T-cell (primary cell): ENCODE measurements at regions of chr6 and their contacts with region 1.

Region 1: DNA sequence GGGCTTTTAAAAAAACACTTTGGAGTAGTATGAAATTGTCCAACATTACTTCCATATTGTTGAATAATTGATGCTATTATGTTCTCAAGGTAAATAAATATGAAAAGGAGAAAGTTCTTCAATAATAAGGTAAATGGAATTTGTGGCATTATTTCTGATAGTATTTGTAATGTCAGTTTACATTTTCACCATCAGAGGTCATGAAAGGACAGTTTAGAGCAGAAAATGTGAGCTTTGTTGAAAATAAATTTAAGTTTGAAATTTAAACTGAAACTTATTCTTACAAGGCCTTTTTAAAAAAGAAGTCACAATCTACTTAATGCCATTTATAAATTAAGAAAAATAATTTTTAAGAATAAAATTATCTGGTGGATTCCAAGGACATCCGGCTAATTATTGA is 15.8 kb upstream of the CEP162 start:
- DNase-seq: no peak
- ATAC-seq: no peak
- H3K4me3 ChIP-seq: no peak overlapping the region
- H3K4me3 Mint-ChIP-seq: no peak overlapping the region
- H3K27ac ChIP-seq: no peak overlapping the region
- H3K27ac Mint-ChIP-seq: no peak overlapping the region
- H3K4me1 ChIP-seq: no peaks in the 10 kb centered on the region
- H3K4me1 Mint-ChIP-seq: no peaks in the 10 kb centered on the region
- H3K27me3 ChIP-seq: no peaks in the 10 kb centered on the region
- H3K27me3 Mint-ChIP-seq: peaks cover 2 to 15% of the 10 kb centered on the region in 2 donors

Region 2: DNA sequence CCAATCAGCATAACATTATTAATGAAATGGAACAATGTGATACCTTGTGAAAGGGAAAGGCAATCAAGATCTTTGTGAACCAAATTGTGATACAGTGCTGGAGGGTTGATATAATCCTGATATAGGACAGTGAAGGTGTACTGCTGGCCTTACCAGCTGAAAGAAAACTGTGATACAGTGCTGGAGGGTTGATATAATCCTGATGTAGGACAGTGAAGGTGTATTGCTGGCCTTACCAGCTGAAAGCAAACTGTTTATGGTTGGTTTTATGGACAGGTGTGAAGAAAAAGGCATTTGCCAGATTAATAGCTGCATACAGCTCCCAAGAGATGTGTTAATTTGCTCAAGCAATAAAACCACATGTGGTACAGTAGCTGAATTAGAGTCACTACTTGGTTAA is 135.7 kb before region 1 on chr6:
- CTCF ChIA-PET with region 1: no interaction called
- POLR2A ChIA-PET with region 1: interaction called in 1 of 2 experiments, 10 read pairs
- DNase-seq: no peak
- ATAC-seq: no peak
- H3K4me3 ChIP-seq: no peak overlapping the region
- H3K4me3 Mint-ChIP-seq: no peak overlapping the region
- H3K27ac ChIP-seq: no peak overlapping the region
- H3K27ac Mint-ChIP-seq: no peak overlapping the region
- H3K4me1 ChIP-seq: no peaks in the 10 kb centered on the region
- H3K4me1 Mint-ChIP-seq: no peaks in the 10 kb centered on the region
- H3K27me3 ChIP-seq: no peaks in the 10 kb centered on the region
- H3K27me3 Mint-ChIP-seq: peaks cover under 1 to 2% of the 10 kb centered on the region in 2 donors

Region 3: DNA sequence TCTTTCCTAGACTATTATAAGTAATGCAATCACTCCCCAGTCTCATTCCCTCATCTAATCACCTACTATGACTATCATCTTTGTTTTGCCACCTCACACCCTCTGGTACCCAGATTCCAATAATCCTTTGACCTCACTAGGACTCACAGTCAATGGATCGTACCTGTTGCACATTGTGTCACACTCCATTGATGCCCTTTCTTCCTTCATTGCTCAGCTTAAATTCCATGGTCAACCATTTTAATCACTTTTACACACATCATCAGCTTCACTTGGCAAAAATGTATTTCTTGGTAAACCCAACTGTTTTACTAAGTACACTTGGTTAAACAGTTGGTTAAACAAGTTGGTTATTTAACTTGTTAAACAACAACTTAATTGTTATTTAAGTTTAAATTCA is 59.8 kb before region 1 on chr6:
- CTCF ChIA-PET with region 1: no interaction called
- POLR2A ChIA-PET with region 1: no interaction called
- DNase-seq: no peak
- ATAC-seq: no peak
- H3K4me3 ChIP-seq: no peak overlapping the region
- H3K4me3 Mint-ChIP-seq: no peak overlapping the region
- H3K27ac ChIP-seq: no peak overlapping the region
- H3K27ac Mint-ChIP-seq: no peak overlapping the region
- H3K4me1 ChIP-seq: no peaks in the 10 kb centered on the region
- H3K4me1 Mint-ChIP-seq: no peaks in the 10 kb centered on the region
- H3K27me3 ChIP-seq: no peaks in the 10 kb centered on the region
- H3K27me3 Mint-ChIP-seq: no peaks in the 10 kb centered on the region

Region 4: DNA sequence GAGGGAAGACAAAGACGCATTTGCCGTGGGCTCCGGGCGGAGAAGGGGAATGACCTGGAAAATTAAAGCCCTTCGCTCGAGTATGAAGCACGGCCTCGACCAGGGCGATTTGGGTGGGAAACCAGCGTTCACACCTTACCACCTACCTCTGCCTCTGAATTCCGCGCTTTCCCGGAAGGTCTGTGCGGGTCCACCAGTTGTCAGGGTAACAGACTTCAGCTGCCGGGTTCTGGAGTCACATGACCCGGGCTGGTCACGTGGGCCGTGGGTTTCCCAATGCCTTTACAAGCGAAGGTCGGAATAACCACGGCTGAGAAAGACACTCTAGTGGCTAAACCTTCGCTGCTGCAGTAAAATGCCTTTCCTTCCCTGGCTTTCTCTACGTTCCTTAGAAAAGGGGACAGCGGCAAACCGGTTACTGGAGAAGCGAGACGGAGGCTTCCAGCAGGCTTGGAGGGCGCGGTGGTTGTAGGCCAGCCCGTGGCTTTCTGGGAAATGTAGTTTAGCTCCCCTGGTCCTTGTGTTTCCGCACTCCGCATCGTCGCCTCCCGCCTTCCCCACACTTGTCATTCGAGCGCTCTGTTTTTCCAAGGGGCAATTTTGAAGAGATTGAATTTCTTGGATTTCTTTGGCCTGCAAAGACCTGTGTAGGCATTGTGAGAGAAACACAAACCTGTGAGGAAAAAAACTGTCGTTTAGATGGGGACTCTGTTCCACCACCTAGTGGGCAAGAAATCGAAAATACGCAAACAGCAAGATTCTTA is 15.6 kb before region 1 on chr6 and contains the start of gene CEP162:
- CTCF ChIA-PET with region 1: no interaction called
- POLR2A ChIA-PET with region 1: no interaction called
- DNase-seq: peak; percentile 75 to 96 (median 87)
- ATAC-seq: peak; percentile 92 to 94 (median 92)
- H3K4me3 ChIP-seq: peak within 1 kb of the TSS; percentile 83 to 100
- H3K4me3 Mint-ChIP-seq: peak within 1 kb of the TSS; percentile 89 to 96 (median 96)
- H3K27ac ChIP-seq: peak within 1 kb of the TSS; percentile 54
- H3K27ac Mint-ChIP-seq: peak within 1 kb of the TSS; percentile 94 to 97
- H3K4me1 ChIP-seq: peaks cover 5 to 6% of the 10 kb centered on the region in 2 experiments
- H3K4me1 Mint-ChIP-seq: peaks cover 21 to 36% (median 22%) of the 10 kb centered on the region in 3 donors
- H3K27me3 ChIP-seq: peaks cover 0 to 2% of the 10 kb centered on the region in 2 experiments
- H3K27me3 Mint-ChIP-seq: peaks cover 6% of the 10 kb centered on the region in 2 donors
- total RNA-seq, gene CEP162: 7.4 to 9.8 (median 7.6) TPM

Region 5: DNA sequence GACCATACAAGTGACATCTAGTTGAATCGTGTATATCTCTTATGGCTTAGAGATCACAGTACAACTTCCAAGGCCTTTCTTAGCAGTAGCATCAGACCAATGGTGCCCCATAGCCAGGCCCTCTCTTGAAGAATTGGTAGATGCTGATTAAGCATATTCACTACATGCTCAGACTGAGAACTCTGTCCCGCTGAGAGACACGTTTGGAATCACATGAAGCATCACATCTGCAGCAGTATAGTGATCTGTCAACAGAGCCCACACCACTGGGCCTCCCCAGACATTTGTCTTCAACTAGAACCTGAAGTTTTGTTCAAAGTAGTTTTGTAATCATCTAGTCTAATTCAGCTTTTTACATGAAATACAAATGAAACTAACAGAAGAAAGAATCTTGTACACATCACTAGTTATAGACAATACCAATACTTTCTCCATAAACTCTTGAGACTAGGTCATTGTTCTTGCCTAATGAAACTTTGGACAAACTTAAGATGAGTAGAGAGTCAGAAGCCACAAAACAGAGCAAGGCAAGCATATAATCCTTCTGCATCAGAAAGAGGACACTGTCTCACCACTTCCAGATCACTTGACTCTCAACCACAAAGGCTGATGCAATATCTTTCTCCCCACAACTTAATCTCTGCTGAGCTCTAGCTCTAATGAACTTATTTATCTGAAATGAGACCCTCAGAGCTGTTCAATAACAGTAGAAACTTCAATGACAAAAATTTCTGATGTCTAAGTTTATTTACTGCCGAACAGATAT is 338.4 kb after region 1 on chr6:
- CTCF ChIA-PET with region 1: no interaction called
- POLR2A ChIA-PET with region 1: no interaction called
- DNase-seq: no peak
- ATAC-seq: no peak
- H3K4me3 ChIP-seq: no peak overlapping the region
- H3K4me3 Mint-ChIP-seq: no peak overlapping the region
- H3K27ac ChIP-seq: no peak overlapping the region
- H3K27ac Mint-ChIP-seq: no peak overlapping the region
- H3K4me1 ChIP-seq: no peaks in the 10 kb centered on the region
- H3K4me1 Mint-ChIP-seq: no peaks in the 10 kb centered on the region
- H3K27me3 ChIP-seq: no peaks in the 10 kb centered on the region
- H3K27me3 Mint-ChIP-seq: no peaks in the 10 kb centered on the region